ENCODE measurements at regions of chr22 and their contacts with region 1.

Region 1: DNA sequence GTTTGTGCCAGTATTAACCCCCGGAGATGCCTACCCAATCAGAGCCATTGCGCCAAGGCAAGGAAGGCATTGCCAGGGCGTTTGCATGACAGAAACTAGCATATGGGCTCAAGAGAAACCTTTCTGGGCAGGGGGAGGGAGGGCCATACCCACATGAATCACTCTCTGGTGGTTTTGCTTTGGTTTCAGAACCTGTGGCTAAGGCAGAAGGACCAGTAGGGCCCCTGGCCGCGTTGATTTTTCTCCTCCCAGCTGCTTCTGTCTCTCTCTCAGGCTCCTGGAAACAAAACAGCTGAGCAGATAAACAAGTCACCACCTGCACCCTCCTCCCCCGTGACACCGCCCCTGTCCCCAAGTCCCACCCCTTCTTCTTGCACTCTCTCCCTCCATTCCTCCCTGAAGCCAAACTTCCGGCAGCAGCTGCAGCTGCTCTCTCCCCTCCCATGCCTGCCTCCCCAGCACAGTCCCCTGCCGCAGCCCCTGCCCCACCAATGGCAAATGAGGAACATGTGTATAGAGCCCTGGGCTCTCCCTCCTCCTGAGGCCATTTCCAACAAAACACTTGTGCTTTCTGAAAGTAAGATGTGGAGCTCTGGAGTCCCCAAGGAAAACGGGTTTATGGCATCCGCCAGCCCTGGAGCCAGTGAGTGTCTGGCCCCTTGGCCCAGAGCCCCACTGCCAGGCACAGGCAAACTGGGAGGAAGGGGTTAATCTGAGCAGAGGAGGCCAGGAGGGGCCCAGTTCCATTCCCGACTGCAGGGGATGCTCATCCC is 39.0 kb upstream of the ADA2 start:
- DNase-seq: peak; percentile 2
- ATAC-seq: no peak
- H3K4me3 ChIP-seq: no peak overlapping the region
- H3K27ac ChIP-seq: no peak overlapping the region
- H3K4me1 ChIP-seq: no peaks in the 10 kb centered on the region
- H3K27me3 ChIP-seq: peaks cover 3% of the 10 kb centered on the region; the same call in 1 of the 2 replicates
- CTCF ChIP-seq: no peak

Region 2: DNA sequence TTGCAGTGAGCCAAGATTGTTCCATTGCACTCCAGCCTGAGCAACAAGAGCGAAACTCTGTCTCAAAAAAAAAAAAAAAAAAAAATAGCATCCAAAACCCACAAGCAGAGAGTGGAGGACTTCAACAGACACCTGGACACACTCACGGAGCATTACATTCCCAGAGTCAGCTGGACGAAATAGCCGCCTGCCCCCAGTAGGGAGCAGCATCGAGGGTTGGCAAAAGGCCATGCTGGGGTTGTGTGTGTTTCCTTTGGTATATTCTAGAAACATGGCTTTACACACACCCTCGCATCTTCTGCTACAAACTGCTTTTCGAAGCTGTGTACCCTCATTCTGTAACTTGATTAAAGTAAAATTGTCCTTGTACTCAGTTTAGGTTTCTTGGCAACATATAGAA is 44.2 kb before region 1 on chr22:
- CTCF ChIA-PET with region 1: no interaction called
- POLR2A ChIA-PET with region 1: no interaction called
- intact Hi-C with region 1: no loop called
- DNase-seq: peak; percentile 19
- ATAC-seq: no peak
- H3K4me3 ChIP-seq: no peak overlapping the region
- H3K27ac ChIP-seq: no peak overlapping the region
- H3K4me1 ChIP-seq: no peaks in the 10 kb centered on the region
- H3K27me3 ChIP-seq: peaks cover 3% of the 10 kb centered on the region; the same call in 1 of the 2 replicates
- CTCF ChIP-seq: peak; percentile 26; the same call in 1 of the 2 replicates

Region 3: DNA sequence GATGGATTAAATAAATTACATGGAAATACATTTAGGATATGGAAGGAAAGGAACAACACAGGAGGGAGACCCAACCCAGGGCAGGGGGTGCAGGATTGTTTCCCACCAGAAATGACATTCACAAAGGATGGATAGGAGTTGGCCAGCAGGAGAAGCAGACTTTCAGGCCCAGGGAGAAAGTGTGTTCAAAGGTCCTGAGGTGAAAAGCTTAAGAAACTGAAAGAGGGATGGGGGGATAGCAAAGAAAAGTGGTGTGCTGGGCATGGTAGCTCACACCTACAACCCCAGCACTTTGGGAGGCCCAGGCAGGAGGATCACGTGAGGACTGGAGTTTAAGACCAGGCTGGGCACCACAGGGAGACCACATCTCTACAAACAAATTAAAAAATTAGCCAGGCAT is 22.3 kb before region 1 on chr22:
- CTCF ChIA-PET with region 1: interaction called, 10 read pairs
- POLR2A ChIA-PET with region 1: no interaction called
- intact Hi-C with region 1: no loop called
- DNase-seq: no peak
- ATAC-seq: no peak
- H3K4me3 ChIP-seq: no peak overlapping the region
- H3K27ac ChIP-seq: no peak overlapping the region
- H3K4me1 ChIP-seq: no peaks in the 10 kb centered on the region
- H3K27me3 ChIP-seq: peaks cover 7% of the 10 kb centered on the region
- CTCF ChIP-seq: no peak

Region 4: DNA sequence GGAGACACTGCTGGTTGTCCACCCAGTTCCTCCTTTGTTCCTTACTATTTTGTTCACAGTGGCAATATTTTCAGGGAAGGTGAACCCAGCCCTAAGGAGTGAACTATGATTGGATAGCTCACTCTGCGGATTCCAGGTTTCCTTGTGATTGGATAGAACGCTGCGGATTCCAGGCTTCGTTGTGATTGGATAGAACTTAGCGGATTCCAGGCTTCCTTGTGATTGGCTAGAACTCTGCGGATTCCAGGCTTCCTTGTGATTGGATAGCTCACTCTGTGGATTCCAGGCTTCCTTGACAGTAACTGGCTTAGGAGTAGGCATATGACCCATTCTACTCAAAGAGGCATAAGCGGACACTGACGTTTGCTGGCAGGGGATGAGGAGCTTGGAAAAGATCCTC is 10.4 kb before region 1 on chr22:
- CTCF ChIA-PET with region 1: no interaction called
- POLR2A ChIA-PET with region 1: interaction called, 18 read pairs
- intact Hi-C with region 1: no loop called
- DNase-seq: no peak
- ATAC-seq: no peak
- H3K4me3 ChIP-seq: no peak overlapping the region
- H3K27ac ChIP-seq: no peak overlapping the region
- H3K4me1 ChIP-seq: no peaks in the 10 kb centered on the region
- H3K27me3 ChIP-seq: no peaks in the 10 kb centered on the region
- CTCF ChIP-seq: no peak

Measured in PC-3 (cell line).